Transverse colon (tissue), 4 donors: ENCODE measurements at regions of chr19 and their contacts with region 1.

Region 1: GRCh38 chr19:6460101-6460853 is 685 bp upstream of the SLC25A23 start:
- DNase-seq: peak; percentile 98
- H3K4me3 ChIP-seq: peak overlapping the region; percentile 50 to 86 (median 77)
- H3K27ac ChIP-seq: peak overlapping the region; percentile 82 to 92 (median 90)
- H3K4me1 ChIP-seq: peaks cover 9 to 35% (median 27%) of the 10 kb centered on the region in 4 donors
- H3K27me3 ChIP-seq: peaks cover 15% of the 10 kb centered on the region
- CTCF ChIP-seq: peak; percentile 61 to 94 (median 68)
- EP300 ChIP-seq: no peak
- POLR2A ChIP-seq: peak; percentile 77

Region 2: DNA sequence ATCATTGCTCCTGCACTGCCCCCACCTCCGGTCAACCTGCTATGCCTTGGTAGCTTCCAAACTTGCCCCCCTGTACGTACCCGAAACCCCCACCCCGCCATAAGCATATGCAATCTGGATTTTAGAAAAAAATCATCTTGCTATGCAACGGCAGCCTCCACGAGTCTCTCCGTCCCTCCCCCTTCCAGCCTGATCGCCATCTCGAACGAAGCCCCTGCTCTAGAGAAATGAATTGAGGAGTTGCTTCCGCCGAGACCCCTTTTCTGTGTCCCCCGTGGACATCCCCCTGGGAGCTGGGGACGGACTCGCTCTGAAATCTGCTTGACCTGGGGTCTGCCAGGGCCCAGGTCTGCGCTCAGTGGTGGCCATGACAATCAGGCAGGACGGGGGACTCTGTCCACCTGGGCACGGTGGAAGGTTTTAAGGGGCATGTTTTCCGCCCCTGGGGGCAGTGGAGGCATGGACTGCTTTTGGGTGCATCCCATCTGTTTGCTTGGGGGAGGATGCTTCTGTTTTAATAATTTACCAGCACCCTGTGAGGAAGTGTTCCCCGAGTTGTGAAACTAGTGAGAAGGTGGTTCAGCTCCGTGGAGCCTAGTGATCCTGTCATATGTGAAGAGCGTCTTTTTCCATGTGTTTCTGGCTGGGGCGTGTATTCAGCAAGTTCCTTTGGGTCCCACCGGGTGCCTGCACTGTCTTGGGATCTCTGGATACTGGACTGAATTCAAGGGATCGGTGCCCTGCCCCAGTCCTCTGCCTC is 1490.3 kb before region 1 on chr19:
- in situ Hi-C with region 1: no loop called
- intact Hi-C with region 1: loop called (anchors 5 kb)
- DNase-seq: no peak
- H3K4me3 ChIP-seq: peak overlapping the region; percentile 67 to 90 (median 84)
- H3K27ac ChIP-seq: peak overlapping the region; percentile 73 to 76 (median 74)
- H3K4me1 ChIP-seq: peaks cover 5 to 53% (median 37%) of the 10 kb centered on the region in 4 donors
- H3K27me3 ChIP-seq: no peaks in the 10 kb centered on the region
- CTCF ChIP-seq: no peak
- EP300 ChIP-seq: no peak
- POLR2A ChIP-seq: no peak

Region 3: GRCh38 chr19:6425732-6426620 is 34.3 kb before region 1 on chr19:
- in situ Hi-C with region 1: no loop called
- intact Hi-C with region 1: no loop called
- DNase-seq: peak; percentile 30
- H3K4me3 ChIP-seq: peak overlapping the region in 3 of 4 donors; percentile 3 to 41 (median 7)
- H3K27ac ChIP-seq: peak overlapping the region; percentile 77 to 91 (median 86)
- H3K4me1 ChIP-seq: peaks cover 8 to 29% (median 20%) of the 10 kb centered on the region in 4 donors
- H3K27me3 ChIP-seq: no peaks in the 10 kb centered on the region
- CTCF ChIP-seq: no peak
- EP300 ChIP-seq: no peak
- POLR2A ChIP-seq: no peak

Region 4: GRCh38 chr19:7871530-7872305 is 1411.4 kb after region 1 on chr19:
- in situ Hi-C with region 1: no loop called
- intact Hi-C with region 1: loop called (anchors 5 kb)
- DNase-seq: peak; percentile 93
- H3K4me3 ChIP-seq: peak overlapping the region in 2 of 4 donors; percentile 9 to 28
- H3K27ac ChIP-seq: peak overlapping the region; percentile 27 to 77 (median 55)
- H3K4me1 ChIP-seq: peaks cover 18 to 51% (median 43%) of the 10 kb centered on the region in 4 donors
- H3K27me3 ChIP-seq: peaks cover 67% of the 10 kb centered on the region
- CTCF ChIP-seq: no peak
- EP300 ChIP-seq: no peak
- POLR2A ChIP-seq: no peak